Common myeloid progenitor, CD34-positive (primary cell): ENCODE measurements at regions of chr3 and their contacts with region 1.

Region 1: DNA sequence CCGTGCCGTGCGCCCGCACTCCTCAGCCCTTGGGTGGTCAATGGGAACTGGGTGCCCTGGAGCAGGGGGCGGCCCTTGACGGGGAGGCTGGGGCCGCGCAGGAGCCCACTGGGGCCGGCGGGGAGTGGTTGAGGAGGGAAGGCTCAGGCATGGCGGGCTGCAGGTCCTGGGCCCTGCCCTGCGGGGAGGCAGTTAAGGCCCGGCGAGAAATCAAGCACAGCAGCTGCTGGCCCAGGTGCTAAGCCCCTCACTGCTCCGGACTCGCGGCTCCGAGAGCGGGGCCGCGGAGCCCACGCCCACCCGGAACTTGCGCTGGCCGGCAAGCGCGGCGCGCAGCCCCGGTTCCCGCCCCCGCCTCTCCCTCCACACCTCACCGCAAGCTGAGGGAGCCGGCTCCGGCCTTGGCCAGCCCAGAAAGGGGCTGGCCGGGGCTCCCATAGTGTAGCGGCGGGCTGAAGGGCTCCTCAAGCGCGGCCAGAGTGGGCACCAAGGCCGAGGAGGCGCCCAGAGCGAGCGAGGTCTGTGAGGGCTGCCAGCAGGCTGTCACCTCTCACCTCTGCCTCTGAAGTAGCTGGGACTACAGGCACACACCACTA is 7.8 kb downstream of the GP9 start:
- DNase-seq: peak in 2 of 3 donors; percentile 46 to 66
- H3K4me3 ChIP-seq: peak overlapping the region in 5 of 7 experiments; percentile 8 to 71 (median 58)
- H3K27ac ChIP-seq: no peak overlapping the region
- H3K4me1 ChIP-seq: peaks cover 8 to 31% (median 20%) of the 10 kb centered on the region in 4 experiments
- H3K27me3 ChIP-seq: no peaks in the 10 kb centered on the region

Region 2: DNA sequence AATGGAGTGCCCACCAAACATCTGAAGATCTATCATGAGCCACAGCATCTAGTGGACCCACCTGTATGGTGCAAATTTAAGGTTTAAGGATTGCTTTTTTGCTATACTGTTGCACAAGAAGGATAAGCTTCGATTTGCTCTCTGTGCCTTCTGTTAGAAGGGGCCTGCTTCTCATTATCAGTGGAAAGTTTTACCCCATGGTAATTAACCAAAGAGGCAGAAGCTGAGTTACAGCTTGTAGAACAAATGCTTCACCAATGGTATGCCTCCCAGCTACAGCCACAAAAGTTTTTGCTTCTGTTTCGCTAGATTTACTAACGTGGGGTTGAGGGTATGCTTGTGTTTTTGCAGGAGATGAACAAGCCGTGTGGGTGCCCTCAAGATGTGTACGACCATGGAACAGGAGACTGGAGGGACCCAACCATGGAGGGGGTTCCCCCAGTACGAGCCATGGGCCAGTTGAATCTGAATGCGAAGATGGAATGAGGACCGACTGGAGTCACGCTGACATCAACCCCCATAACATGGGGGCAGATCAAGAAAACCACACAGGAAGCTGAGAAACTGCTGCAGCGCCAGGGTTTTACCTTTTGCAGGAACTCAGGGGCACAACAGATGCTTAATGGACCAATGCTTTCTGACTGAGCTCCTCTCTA is 145.5 kb before region 1 on chr3:
- CTCF ChIA-PET with region 1: no interaction called
- POLR2A ChIA-PET with region 1: no interaction called
- DNase-seq: peak; percentile 20 to 83 (median 80)
- H3K4me3 ChIP-seq: peak overlapping the region in 4 of 7 experiments; percentile 1 to 64 (median 28)
- H3K27ac ChIP-seq: no peak overlapping the region
- H3K4me1 ChIP-seq: peaks cover 0 to 17% (median 14%) of the 10 kb centered on the region in 4 experiments
- H3K27me3 ChIP-seq: no peaks in the 10 kb centered on the region

Region 3: GRCh38 chr3:129087138-129087702 is 18.8 kb after region 1 on chr3:
- CTCF ChIA-PET with region 1: interaction called, 12 read pairs
- POLR2A ChIA-PET with region 1: no interaction called
- DNase-seq: no peak
- H3K4me3 ChIP-seq: no peak overlapping the region
- H3K27ac ChIP-seq: no peak overlapping the region
- H3K4me1 ChIP-seq: peaks cover 0 to 5% (median 1%) of the 10 kb centered on the region in 4 experiments
- H3K27me3 ChIP-seq: no peaks in the 10 kb centered on the region